PC-3 (cell line): ENCODE measurements at regions of chr2 and their contacts with region 1.

Region 1: DNA sequence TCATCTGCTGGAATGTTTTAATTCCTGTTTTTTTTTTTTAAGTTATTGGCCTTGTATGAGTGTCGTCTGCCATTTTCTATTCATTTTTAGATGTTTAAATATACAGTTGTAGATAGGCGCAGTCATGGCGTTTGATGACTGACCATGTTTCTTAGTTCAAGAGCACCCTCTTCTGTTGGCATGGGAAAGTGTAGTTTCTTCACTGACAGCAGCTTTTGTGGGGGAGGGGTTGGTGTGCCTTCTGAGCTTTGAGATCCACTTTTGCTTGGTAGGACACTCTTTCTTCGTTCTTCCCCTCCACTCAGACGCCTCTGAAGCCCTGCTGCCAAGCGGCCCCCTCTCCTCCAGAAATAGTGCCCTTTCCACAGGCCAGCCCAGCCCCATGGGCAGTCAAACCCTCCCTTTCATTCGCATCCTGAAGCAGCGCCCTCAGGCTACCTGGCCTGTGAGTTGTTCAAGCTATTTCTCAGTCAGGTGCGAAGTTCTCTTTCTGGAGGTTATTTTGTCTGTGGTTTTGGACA is 492.0 kb downstream of the TNS1 start:
- DNase-seq: peak; percentile 88
- ATAC-seq: peak; percentile 85
- H3K4me3 ChIP-seq: no peak overlapping the region
- H3K27ac ChIP-seq: no peak overlapping the region
- H3K4me1 ChIP-seq: peaks cover 11% of the 10 kb centered on the region
- H3K27me3 ChIP-seq: no peaks in the 10 kb centered on the region
- CTCF ChIP-seq: peak; percentile 86

Region 2: DNA sequence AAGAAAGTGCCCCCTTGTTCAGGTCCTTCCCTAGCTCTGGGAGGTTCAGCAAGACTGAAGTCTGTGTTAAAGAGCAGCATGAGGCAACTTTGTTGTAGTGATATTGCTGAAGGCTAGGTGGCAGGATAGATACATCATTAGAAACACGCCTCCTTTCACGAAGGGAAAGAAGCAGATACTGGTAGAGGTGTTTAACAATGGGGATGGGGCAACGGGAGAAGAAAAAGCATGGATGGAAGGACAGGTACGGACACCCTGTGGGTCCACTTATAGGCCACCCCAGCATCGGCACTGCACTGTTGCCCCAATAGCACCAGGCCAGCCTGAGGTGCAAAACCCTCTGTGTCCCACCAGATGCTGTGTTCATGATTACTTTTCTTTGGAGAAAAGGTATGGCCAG is 811.9 kb before region 1 on chr2:
- CTCF ChIA-PET with region 1: interaction called, 8 read pairs
- POLR2A ChIA-PET with region 1: no interaction called
- intact Hi-C with region 1: loop called (anchors 1 kb)
- DNase-seq: peak; percentile 74
- ATAC-seq: peak; percentile 68
- H3K4me3 ChIP-seq: no peak overlapping the region
- H3K27ac ChIP-seq: no peak overlapping the region
- H3K4me1 ChIP-seq: peaks cover 35% of the 10 kb centered on the region
- H3K27me3 ChIP-seq: no peaks in the 10 kb centered on the region
- CTCF ChIP-seq: peak; percentile 86

Region 3: GRCh38 chr2:217049956-217050355 is 460.9 kb before region 1 on chr2:
- CTCF ChIA-PET with region 1: no interaction called
- POLR2A ChIA-PET with region 1: no interaction called
- intact Hi-C with region 1: no loop called
- DNase-seq: no peak
- ATAC-seq: no peak
- H3K4me3 ChIP-seq: no peak overlapping the region
- H3K27ac ChIP-seq: no peak overlapping the region
- H3K4me1 ChIP-seq: peaks cover 12% of the 10 kb centered on the region
- H3K27me3 ChIP-seq: no peaks in the 10 kb centered on the region
- CTCF ChIP-seq: no peak

Region 4: DNA sequence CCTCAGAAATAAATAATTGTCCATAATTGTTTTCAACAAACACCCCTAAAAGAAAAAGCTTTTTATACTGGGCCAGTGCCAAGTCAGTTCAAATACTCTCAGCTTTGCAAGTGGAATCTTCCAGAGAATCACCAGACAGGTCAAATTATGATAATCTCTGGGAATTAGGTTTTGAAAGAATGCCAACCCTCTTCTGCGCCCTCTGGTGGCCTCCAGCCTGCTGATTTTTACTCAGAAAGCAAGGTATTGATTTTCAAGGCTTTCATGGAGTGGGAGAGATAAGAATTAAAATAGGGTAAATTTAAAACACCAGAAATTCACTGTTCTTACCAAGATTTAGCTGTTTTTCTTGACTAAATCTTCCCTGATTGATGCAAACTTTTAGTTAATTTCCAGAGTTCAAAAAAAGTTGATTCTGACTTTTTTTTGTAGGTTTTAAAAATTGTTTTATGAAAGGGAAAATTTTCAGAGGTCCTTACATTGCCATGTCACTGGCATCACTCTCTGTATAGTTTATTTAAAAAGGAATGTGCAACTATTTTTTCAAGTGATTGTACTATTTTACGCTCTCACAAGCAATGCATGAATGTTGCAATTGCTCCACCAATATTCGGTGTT is 368.1 kb before region 1 on chr2:
- CTCF ChIA-PET with region 1: interaction called, 3 read pairs
- POLR2A ChIA-PET with region 1: no interaction called
- intact Hi-C with region 1: loop called (anchors 2 kb)
- DNase-seq: peak; percentile 65
- ATAC-seq: no peak
- H3K4me3 ChIP-seq: no peak overlapping the region
- H3K27ac ChIP-seq: no peak overlapping the region
- H3K4me1 ChIP-seq: no peaks in the 10 kb centered on the region
- H3K27me3 ChIP-seq: no peaks in the 10 kb centered on the region
- CTCF ChIP-seq: peak; percentile 92

Region 5: GRCh38 chr2:217277646-217278398 is 233.0 kb before region 1 on chr2:
- CTCF ChIA-PET with region 1: no interaction called
- POLR2A ChIA-PET with region 1: no interaction called
- intact Hi-C with region 1: loop called (anchors 2 kb)
- DNase-seq: peak; percentile 96
- ATAC-seq: peak; percentile 72
- H3K4me3 ChIP-seq: no peak overlapping the region
- H3K27ac ChIP-seq: peak overlapping the region; percentile 94
- H3K4me1 ChIP-seq: peaks cover 50% of the 10 kb centered on the region
- H3K27me3 ChIP-seq: no peaks in the 10 kb centered on the region
- CTCF ChIP-seq: no peak

Region 6: GRCh38 chr2:217459680-217460405 is 51.0 kb before region 1 on chr2:
- CTCF ChIA-PET with region 1: no interaction called
- POLR2A ChIA-PET with region 1: no interaction called
- intact Hi-C with region 1: no loop called
- DNase-seq: no peak
- ATAC-seq: no peak
- H3K4me3 ChIP-seq: no peak overlapping the region
- H3K27ac ChIP-seq: no peak overlapping the region
- H3K4me1 ChIP-seq: no peaks in the 10 kb centered on the region
- H3K27me3 ChIP-seq: no peaks in the 10 kb centered on the region
- CTCF ChIP-seq: no peak

Region 7: GRCh38 chr2:217478831-217479455 is 31.9 kb before region 1 on chr2:
- CTCF ChIA-PET with region 1: no interaction called
- POLR2A ChIA-PET with region 1: no interaction called
- intact Hi-C with region 1: no loop called
- DNase-seq: no peak
- ATAC-seq: no peak
- H3K4me3 ChIP-seq: no peak overlapping the region
- H3K27ac ChIP-seq: no peak overlapping the region
- H3K4me1 ChIP-seq: no peaks in the 10 kb centered on the region
- H3K27me3 ChIP-seq: no peaks in the 10 kb centered on the region
- CTCF ChIP-seq: no peak

Region 8: DNA sequence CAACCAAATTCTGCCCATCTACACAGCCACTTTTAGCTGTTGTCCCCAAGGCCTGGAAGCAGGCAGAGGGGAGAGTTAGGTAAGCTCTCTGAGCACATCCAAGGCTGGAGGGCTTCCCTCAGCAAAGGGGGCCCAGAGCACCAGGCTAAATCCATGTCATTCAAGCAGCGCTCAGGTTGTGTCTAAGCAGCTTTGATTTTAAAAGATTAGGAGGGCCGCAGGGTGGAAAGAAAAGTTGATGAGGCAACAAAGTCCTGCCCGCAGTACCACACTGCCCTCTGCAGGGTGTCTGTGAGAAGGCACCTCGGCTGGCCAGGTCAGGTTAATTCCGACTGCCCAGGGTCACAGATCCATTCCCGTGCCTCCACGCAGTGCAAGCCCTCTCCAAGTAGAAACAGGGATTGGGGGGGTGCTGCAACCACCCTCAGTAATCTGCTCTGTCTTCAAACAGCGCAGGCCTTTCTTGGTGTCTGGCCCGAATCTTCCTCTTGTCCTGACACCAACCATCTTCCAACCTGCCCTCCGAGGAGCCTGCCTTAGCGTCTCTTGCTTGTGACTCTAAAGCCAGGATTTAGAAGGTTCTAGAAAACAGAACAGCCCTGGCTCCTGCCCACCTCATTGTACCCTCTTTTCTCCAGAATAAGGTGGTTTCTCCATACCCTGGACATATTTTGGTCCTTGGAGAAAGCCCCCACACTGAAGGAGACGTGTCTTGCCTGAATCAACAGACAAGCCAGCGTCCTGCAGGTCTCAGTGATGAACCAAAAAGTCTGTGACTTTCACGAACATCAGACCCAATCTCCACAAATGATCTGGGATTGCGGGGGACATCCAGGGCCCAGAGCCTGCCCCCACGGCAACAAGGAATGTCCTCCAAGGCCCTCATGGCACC is 202.8 kb after region 1 on chr2:
- CTCF ChIA-PET with region 1: interaction called, 4 read pairs
- POLR2A ChIA-PET with region 1: no interaction called
- intact Hi-C with region 1: loop called (anchors 2 kb)
- DNase-seq: peak; percentile 84
- ATAC-seq: peak; percentile 86
- H3K4me3 ChIP-seq: no peak overlapping the region
- H3K27ac ChIP-seq: no peak overlapping the region
- H3K4me1 ChIP-seq: peaks cover 25% of the 10 kb centered on the region
- H3K27me3 ChIP-seq: no peaks in the 10 kb centered on the region
- CTCF ChIP-seq: peak; percentile 93